Dorsolateral prefrontal cortex (tissue), 120 donors: ENCODE measurements at regions of chr2 and their contacts with region 1.

Region 1: GRCh38 chr2:25664183-25664964 is 9.0 kb downstream of the DTNB start:
- DNase-seq: peak in 4 of 10 donors; percentile 45 to 63 (median 56)
- H3K4me3 ChIP-seq: peak overlapping the region in 4 of 59 donors; percentile 0 to 28 (median 14)
- H3K27ac ChIP-seq: no peak overlapping the region
- H3K27me3 ChIP-seq: no peaks in the 10 kb centered on the region
- CTCF ChIP-seq: peak; percentile 26 to 84 (median 66)

Region 2: GRCh38 chr2:24515831-24516230 is 1148.5 kb before region 1 on chr2:
- intact Hi-C with region 1: no loop called
- DNase-seq: no peak
- H3K4me3 ChIP-seq: no peak overlapping the region
- H3K27ac ChIP-seq: no peak overlapping the region
- H3K27me3 ChIP-seq: no peaks in the 10 kb centered on the region
- CTCF ChIP-seq: no peak

Region 3: GRCh38 chr2:25606892-25607291 is 57.5 kb before region 1 on chr2:
- intact Hi-C with region 1: loop called (anchors 2 kb)
- DNase-seq: no peak
- H3K4me3 ChIP-seq: no peak overlapping the region
- H3K27ac ChIP-seq: peak overlapping the region in 3 of 59 donors; percentile 8 to 62 (median 26)
- H3K27me3 ChIP-seq: no peaks in the 10 kb centered on the region
- CTCF ChIP-seq: peak; percentile 47 to 94 (median 76)

Region 4: GRCh38 chr2:25822190-25823117 is 158.1 kb after region 1 on chr2:
- intact Hi-C with region 1: no loop called
- DNase-seq: peak; percentile 42 to 79 (median 54)
- H3K4me3 ChIP-seq: peak overlapping the region; percentile 11 to 68 (median 48)
- H3K27ac ChIP-seq: peak overlapping the region in 38 of 59 donors; percentile 4 to 72 (median 52)
- H3K27me3 ChIP-seq: no peaks in the 10 kb centered on the region
- CTCF ChIP-seq: peak in 18 of 56 donors; percentile 5 to 23 (median 15)